Right cardiac atrium (tissue), 5 donors: ENCODE measurements at regions of chr4 and their contacts with region 1.

Region 1: DNA sequence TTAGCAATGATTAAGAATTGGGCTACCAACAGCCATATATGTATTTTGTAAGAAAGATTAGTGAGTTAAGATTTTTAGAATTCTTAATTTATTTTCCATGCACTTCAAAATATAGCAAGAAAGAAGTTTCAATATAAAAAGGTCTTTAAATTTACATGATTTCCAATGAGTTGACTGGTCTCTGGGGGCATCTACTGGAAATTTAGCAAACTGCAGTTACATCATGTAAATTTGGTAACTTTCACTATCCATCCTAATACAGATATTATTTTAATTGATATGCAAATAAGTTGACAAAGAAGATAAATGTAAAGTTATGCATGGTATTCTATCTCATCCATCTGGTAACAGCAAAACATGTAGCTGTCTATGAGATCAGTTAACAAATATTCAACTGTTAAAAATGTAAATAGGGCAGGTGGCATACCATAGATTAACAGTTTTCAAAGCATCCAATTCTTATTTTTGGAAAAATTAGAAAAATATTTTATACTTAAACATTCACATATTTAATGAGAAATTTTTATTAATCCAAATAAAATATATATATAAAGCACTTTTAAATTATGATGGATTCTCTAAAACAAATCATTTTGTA is 29.1 kb downstream of the TTC29 start:
- DNase-seq: no peak
- ATAC-seq: no peak
- H3K4me3 ChIP-seq: no peak overlapping the region
- H3K27ac ChIP-seq: no peak overlapping the region
- H3K4me1 ChIP-seq: no peaks in the 10 kb centered on the region
- H3K27me3 ChIP-seq: no peaks in the 10 kb centered on the region

Region 2: DNA sequence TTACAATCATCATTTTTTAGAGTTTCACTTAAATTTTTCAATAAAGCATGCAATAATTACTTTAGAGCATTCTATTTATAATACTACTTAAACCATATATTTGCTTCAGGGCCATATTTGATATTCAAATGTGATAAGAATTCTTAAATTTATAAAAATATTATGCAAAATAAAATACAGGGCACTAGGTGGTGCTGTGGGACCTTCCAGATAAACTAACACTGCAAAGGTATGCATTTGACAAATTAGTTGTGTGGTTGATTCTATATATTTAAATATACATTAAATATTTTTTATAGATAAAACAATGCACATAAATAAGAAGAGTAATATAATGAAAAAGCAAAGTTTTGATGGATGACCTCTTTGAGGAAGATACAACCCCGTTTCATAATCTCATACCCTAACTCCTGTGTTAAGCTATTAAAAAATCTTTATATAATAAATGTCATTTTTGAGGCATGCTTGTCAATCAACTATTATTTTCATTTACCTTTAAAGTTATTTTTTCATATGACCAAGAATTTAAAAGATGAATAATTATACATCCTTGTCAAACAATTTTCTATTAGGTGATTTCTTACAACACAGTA is 573.9 kb before region 1 on chr4:
- intact Hi-C with region 1: loop called in 3 of 4 experiments (anchors 5 to 10 kb)
- DNase-seq: no peak
- ATAC-seq: no peak
- H3K4me3 ChIP-seq: no peak overlapping the region
- H3K27ac ChIP-seq: no peak overlapping the region
- H3K4me1 ChIP-seq: no peaks in the 10 kb centered on the region
- H3K27me3 ChIP-seq: no peaks in the 10 kb centered on the region

Region 3: GRCh38 chr4:146592019-146592418 is 324.6 kb before region 1 on chr4:
- intact Hi-C with region 1: no loop called
- DNase-seq: no peak
- ATAC-seq: no peak
- H3K4me3 ChIP-seq: no peak overlapping the region
- H3K27ac ChIP-seq: no peak overlapping the region
- H3K4me1 ChIP-seq: no peaks in the 10 kb centered on the region
- H3K27me3 ChIP-seq: no peaks in the 10 kb centered on the region